Heart left ventricle (tissue), 16 donors: ENCODE measurements at regions of chr6 and their contacts with region 1.

Region 1: DNA sequence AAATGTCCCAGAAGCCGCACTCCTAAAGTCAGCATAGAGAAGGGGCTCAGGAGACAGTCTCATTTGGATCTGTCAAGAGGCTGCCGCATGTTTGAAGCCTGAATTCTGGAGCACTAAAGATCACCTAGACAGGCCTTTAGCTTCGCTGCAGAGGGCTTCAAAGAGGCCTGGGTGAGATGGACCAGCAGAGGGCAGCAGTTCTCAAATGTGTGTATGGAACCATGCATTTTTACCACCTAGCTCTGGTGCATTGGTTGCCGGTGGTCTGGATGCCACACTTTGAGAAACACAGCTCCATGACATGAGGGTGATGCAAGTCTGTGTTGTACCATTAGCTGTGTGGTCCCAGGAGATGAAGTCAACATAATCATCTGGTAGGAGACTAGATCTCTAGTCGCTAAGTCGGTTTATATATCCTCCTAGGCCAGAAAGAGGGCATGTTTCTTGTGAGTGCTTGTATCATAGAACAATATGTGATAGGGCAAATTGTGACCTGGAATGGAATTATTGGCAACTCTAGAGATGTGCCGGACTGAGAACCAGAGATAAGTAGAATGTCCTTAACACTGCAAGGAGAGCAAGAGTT is 64.8 kb downstream of the KIAA0319 start:
- DNase-seq: peak; percentile 45 to 75 (median 66)
- ATAC-seq: peak; percentile 70 to 88 (median 80)
- H3K4me3 ChIP-seq: no peak overlapping the region
- H3K27ac ChIP-seq: no peak overlapping the region
- H3K4me1 ChIP-seq: peaks cover 0 to 11% (median 2%) of the 10 kb centered on the region in 12 donors
- H3K27me3 ChIP-seq: no peaks in the 10 kb centered on the region
- CTCF ChIP-seq: peak; percentile 67 to 85 (median 82)
- POLR2A ChIP-seq: no peak

Region 2: DNA sequence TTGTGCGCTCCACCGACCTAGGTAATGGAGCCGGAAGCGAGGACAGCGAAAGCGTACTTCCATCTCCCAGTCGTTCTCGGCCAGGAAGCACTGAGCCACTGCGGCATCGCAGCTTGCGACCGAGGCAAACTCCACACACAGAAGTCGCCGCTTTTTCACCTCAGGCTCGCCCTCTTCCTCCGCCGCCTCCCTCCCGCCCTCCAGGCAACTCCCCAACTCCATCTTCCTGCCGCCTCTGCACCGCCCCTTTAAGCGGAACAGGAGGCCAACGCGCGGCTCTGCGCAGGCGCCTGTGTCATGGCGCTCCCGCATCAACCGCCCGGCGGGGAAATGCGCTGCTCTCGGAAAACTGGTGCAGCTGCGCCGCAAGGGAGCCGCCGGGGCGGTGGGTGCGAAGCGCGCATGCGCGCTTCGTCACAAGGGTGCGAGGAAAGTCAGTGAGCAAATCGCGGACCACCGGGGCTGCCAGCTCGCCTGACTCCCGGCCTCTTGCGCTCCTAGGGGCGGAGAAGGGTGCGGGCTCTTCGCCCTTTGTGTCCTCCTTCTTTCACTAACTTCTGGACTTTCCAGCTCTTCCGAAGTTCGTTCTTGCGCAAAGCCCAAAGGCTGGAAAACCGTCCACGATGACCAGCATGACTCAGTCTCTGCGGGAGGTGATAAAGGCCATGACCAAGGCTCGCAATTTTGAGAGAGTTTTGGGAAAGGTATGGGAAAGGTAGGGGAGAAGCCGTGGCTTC is 85.6 kb after region 1 on chr6 and contains the starts of genes ACOT13 and TDP2:
- intact Hi-C with region 1: loop called in 1 of 10 experiments (anchors 1 kb)
- DNase-seq: peak; percentile 96 to 99 (median 97)
- ATAC-seq: peak; percentile 99 to 100 (median 100)
- H3K4me3 ChIP-seq: peak within 1 kb of the TSS; percentile 70 to 99 (median 83)
- H3K27ac ChIP-seq: peak within 1 kb of the TSS; percentile 77 to 96 (median 89)
- H3K4me1 ChIP-seq: peaks cover 0 to 40% (median 26%) of the 10 kb centered on the region in 12 donors
- H3K27me3 ChIP-seq: no peaks in the 10 kb centered on the region
- CTCF ChIP-seq: peak in 11 of 12 donors; percentile 31 to 72 (median 50)
- POLR2A ChIP-seq: peak in 1 of 2 donors; percentile 75
- total RNA-seq, gene ACOT13: 28.1 to 62.7 (median 55.3) TPM
- total RNA-seq, gene TDP2: 14.0 to 33.4 (median 25.1) TPM

Region 3: DNA sequence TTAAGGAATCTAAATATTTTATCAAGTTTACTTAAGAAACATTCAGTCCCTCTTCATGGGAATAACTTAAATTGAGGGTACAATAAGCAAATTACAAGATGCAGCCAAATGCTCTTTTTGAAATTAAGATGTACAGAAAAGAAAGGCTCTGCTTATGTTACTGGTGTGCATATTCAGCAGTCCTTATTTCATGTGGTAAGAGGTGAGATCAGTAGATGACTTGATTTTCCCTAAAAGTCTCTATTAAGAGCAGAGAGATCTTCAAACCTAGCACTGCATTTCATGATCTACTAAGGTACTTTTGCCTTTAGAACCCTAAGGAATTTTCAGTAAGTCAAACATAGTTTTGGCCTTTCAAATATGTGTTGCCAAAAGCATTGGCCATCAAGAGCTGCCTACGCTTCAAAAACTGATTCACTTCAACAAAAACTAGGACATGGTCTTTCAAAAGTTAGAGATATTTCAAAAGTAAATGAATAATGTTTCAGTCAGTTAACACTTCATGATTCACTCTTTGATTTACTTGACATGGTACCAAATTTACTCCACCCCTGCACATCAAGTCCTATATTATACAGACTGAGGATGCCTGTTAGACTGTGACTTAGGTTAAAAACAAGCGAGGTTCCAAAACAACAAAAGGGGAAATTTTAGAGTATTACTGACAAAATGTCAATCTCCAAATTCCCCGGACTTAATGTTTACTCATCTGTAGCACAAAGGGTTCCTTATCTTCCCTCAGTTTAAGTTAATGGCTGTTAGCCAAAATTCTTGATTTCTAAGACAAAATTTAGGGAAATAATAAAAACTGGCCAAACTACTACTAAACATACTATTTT is 118.6 kb after region 1 on chr6:
- intact Hi-C with region 1: loop called in 9 of 10 experiments (anchors 1 to 5 kb)
- DNase-seq: no peak
- ATAC-seq: peak in 1 of 4 donors; percentile 46
- H3K4me3 ChIP-seq: no peak overlapping the region
- H3K27ac ChIP-seq: peak overlapping the region in 1 of 12 donors; percentile 0
- H3K4me1 ChIP-seq: peaks cover 0 to 12% (median 0%) of the 10 kb centered on the region in 12 donors
- H3K27me3 ChIP-seq: no peaks in the 10 kb centered on the region
- CTCF ChIP-seq: no peak
- POLR2A ChIP-seq: no peak

Region 4: DNA sequence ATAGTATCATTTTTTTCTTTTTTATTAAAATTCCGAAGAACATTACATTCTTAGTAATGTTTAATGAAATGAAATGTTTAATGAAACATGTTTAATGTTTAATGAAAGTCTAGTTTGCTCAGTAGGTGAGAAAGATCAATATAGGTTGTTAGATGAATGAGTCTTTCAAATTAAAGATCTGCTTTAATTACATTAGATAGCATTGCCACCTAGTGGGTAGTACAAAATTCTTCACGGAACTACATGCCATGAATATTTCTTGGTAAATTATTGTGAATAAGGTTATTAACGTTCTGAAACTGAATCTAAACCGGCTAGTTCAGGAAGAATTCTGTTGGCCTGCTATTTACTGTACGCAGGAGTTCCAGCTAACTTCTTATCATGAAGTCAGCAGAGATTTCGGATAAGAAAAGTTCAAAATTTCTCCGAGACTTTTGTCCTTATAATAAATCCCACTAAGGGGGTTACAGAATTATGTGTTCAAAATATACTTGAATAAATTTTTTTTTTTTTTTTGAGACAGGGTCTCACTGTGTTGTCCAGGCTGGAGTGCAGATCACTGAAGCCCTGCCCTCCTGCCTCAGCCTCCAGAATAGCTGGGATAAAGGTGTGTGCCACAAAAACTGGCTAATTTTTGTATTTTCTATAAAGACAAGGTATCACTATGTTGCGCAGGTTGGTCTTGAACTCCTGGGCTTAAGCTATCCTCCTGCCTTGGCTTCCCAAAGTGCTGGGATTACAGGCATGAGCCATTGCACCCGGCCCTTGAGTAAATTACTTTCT is 185.7 kb after region 1 on chr6:
- intact Hi-C with region 1: loop called (anchors 1 to 10 kb)
- DNase-seq: no peak
- ATAC-seq: no peak
- H3K4me3 ChIP-seq: no peak overlapping the region
- H3K27ac ChIP-seq: no peak overlapping the region
- H3K4me1 ChIP-seq: no peaks in the 10 kb centered on the region
- H3K27me3 ChIP-seq: no peaks in the 10 kb centered on the region
- CTCF ChIP-seq: peak in 11 of 12 donors; percentile 27 to 60 (median 46)
- POLR2A ChIP-seq: no peak

Region 5: GRCh38 chr6:25070547-25071366 is 489.6 kb after region 1 on chr6:
- intact Hi-C with region 1: loop called in 8 of 10 experiments (anchors 2 to 10 kb)
- DNase-seq: peak; percentile 73 to 78 (median 76)
- ATAC-seq: peak in 3 of 4 donors; percentile 87 to 88 (median 87)
- H3K4me3 ChIP-seq: peak overlapping the region in 1 of 12 donors; percentile 20
- H3K27ac ChIP-seq: peak overlapping the region in 3 of 12 donors; percentile 31 to 58 (median 42)
- H3K4me1 ChIP-seq: peaks cover 0 to 6% (median 0%) of the 10 kb centered on the region in 12 donors
- H3K27me3 ChIP-seq: no peaks in the 10 kb centered on the region
- CTCF ChIP-seq: peak; percentile 87 to 96 (median 94)
- POLR2A ChIP-seq: no peak